ENCODE measurements at regions of chr6 and their contacts with region 1.

Region 1: GRCh38 chr6:157060440-157060952 is 262.8 kb downstream of the TMEM242 start:
- DNase-seq: no peak
- H3K4me3 ChIP-seq: no peak overlapping the region
- H3K27me3 ChIP-seq: no peaks in the 10 kb centered on the region
- CTCF ChIP-seq: no peak

Region 2: GRCh38 chr6:155275808-155276480 is 1784.6 kb before region 1 on chr6:
- CTCF ChIA-PET with region 1: no interaction called
- POLR2A ChIA-PET with region 1: interaction called, 11 read pairs
- DNase-seq: no peak
- H3K4me3 ChIP-seq: no peak overlapping the region
- H3K27me3 ChIP-seq: no peaks in the 10 kb centered on the region
- CTCF ChIP-seq: no peak

Region 3: GRCh38 chr6:156953479-156954146 is 106.9 kb before region 1 on chr6:
- CTCF ChIA-PET with region 1: no interaction called
- POLR2A ChIA-PET with region 1: no interaction called
- DNase-seq: peak; percentile 97
- H3K4me3 ChIP-seq: peak overlapping the region; percentile 24
- H3K27me3 ChIP-seq: no peaks in the 10 kb centered on the region
- CTCF ChIP-seq: peak; percentile 54

Region 4: DNA sequence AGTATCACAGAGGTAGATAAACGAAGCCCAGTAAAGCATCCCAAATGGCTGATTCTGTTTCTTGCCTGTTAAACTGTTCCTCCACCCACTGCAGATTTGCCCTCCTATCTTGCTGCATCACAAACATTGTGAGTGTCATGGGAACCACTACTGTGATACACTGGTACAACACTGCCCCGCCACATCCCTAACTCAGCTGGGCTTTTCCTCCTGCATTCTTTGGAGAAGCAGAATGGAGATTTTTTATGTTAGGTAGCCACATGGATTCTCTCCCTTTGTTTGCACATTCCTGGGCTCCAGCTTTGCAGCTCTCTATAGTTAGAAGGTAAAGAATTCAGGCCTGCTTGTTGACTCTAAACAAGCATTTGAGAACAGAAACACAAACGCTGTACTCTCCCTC is 28.8 kb after region 1 on chr6:
- CTCF ChIA-PET with region 1: no interaction called
- POLR2A ChIA-PET with region 1: no interaction called
- DNase-seq: peak; percentile 29
- H3K4me3 ChIP-seq: no peak overlapping the region
- H3K27me3 ChIP-seq: no peaks in the 10 kb centered on the region
- CTCF ChIP-seq: no peak

Region 5: DNA sequence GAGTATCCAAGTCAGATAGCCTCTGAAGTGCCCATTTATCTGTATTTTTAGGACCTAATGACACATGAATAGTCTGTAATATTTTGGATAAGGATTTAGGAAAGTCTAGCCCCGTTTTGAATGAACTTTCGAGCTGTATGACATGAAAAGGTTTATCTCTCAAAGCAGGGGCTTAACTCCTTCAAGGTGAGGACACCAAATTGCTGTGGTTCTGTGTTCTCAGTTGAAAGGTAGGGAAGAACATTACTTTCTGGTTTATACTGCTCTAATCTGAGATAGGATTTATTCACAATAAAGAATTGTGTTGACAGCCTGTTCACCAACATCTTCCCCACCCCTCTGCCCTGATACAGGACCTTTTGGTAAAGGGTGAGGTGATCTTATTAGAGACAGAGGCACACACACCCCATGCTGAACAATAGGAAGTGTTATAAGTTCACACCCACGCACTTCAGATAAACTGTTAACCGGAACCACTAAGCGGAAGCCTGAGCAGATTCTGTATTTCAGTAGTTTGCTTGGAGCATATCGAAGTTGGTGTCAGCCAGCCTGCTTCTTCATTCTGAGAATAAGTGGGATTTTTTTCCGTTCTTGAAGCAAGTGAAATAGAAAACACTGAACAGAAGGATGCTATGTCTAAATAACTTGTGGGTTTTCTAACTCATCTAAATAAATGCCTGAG is 39.6 kb after region 1 on chr6:
- CTCF ChIA-PET with region 1: no interaction called
- POLR2A ChIA-PET with region 1: no interaction called
- DNase-seq: no peak
- H3K4me3 ChIP-seq: no peak overlapping the region
- H3K27me3 ChIP-seq: no peaks in the 10 kb centered on the region
- CTCF ChIP-seq: no peak

Region 6: DNA sequence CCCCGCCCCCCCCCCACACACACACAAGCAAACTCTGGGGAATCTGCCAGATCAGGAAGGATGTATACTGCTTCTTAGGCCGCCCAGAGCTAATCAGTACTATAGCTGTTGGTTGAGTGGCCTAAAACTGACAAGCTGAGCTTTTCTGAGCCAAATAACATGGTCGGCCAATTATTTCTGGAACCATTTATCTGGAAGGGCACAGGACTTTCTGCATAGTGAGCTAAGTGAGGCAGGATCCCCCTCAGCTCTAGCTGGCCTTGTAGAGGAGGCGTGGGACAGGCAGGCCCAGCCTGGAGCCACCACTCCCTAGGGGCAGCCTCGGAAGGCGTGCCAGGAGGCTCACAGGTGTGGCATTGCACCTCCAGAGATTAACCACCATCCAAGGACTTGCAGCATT is 62.7 kb after region 1 on chr6:
- CTCF ChIA-PET with region 1: no interaction called
- POLR2A ChIA-PET with region 1: no interaction called
- DNase-seq: no peak
- H3K4me3 ChIP-seq: no peak overlapping the region
- H3K27me3 ChIP-seq: no peaks in the 10 kb centered on the region
- CTCF ChIP-seq: no peak

Measured in BJ (cell line).